HepG2 (cell line): ENCODE measurements at regions of chr6 and their contacts with region 1.

Region 1: DNA sequence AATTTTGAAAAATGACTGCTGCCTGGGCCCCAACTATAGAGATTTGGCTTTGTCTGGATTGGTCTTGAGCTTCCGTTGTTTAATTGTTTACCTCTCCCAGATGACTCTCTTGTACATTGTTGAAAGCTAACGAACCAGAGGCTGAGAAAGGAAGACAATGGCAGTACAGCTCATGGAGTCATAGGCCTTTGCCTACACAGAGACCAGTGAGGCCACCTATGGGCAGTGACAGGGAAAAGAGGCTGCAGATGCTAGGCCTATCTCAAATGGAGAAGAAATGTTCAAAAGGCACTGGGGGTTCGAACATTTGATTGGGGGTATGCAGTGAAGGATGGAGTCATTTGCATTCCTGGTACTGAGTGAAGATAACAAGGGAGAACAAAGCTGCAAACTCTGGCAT is 29.1 kb downstream of the OPN5 start:
- DNase-seq: peak; percentile 16
- ATAC-seq: peak; percentile 93
- H3K4me3 ChIP-seq: no peak overlapping the region
- H3K27ac ChIP-seq: no peak overlapping the region
- H3K4me1 ChIP-seq: no peaks in the 10 kb centered on the region
- H3K27me3 ChIP-seq: peaks cover 0 to 8% of the 10 kb centered on the region in 2 experiments; a peak in 2 of 5 replicates
- CTCF ChIP-seq: 0 out of 2 replicates have a peak, but pooled peaks have one; percentile 24
- EP300 ChIP-seq: no peak
- POLR2A ChIP-seq: no peak
- RAD21 ChIP-seq: no peak

Region 2: GRCh38 chr6:47853766-47854165 is 42.9 kb after region 1 on chr6:
- CTCF ChIA-PET with region 1: no interaction called
- POLR2A ChIA-PET with region 1: no interaction called
- in situ Hi-C with region 1: no loop called
- intact Hi-C with region 1: loop called (anchors 1 kb)
- DNase-seq: no peak
- ATAC-seq: peak; percentile 40; the same call in 2 of the 3 replicates
- H3K4me3 ChIP-seq: no peak overlapping the region
- H3K27ac ChIP-seq: no peak overlapping the region
- H3K4me1 ChIP-seq: no peaks in the 10 kb centered on the region
- H3K27me3 ChIP-seq: peaks cover 0 to 3% of the 10 kb centered on the region in 2 experiments; a peak in 1 of 5 replicates
- CTCF ChIP-seq: peak; percentile 12; the same call in 1 of the 2 replicates
- EP300 ChIP-seq: no peak
- POLR2A ChIP-seq: no peak
- RAD21 ChIP-seq: no peak